H1 (cell line): ENCODE measurements at regions of chr5 and their contacts with region 1.

Region 1: DNA sequence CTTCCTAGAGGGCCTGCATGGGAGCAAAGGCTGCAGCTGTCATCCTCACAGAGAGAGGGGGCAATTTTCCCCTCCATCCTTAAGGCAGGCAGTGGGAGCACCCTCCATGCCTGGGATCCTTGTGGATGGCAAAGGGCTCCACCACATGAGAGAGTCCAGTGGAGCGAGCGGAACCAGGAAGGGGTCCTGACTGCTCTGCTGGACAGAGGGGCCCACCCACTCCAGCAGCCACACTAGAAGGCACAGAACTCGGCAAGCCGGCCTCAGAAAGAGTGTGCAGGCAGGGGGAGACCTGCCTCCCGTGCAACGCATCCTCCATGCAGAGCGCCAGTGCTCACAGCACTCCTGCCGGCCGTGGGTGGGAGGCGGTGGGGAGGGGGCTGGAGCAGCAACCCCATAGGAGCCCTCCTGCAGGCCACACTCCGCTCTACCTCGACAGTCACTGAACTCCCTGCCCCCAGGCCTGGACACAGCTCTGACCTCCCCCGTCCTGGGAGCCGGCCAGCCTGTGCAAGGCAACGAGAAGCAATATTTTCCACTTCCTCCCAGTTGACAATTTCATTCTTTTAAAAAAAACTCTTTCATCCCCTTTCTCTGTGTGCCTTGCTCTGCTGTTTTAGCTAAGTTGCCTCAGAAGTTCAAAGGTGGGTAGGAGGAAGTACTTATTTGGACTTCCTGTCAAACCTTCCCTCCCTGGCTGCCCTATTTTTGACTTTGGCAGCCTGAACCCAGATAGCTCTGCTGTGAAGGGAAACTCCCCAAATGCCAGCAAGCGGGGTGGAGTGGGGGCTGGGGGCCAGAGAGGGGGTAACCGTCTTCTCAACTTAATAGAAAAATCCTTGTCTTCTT is 5.3 kb upstream of the LCP2 start:
- DNase-seq: no peak
- H3K4me3 ChIP-seq: no peak overlapping the region
- H3K27ac ChIP-seq: no peak overlapping the region
- H3K4me1 ChIP-seq: peaks cover 0 to 5% (median 2%) of the 10 kb centered on the region in 4 experiments; a peak in 2 of 7 replicates
- H3K27me3 ChIP-seq: no peaks in the 10 kb centered on the region; a peak in 1 of 7 replicates
- CTCF ChIP-seq: peak; percentile 7 to 32 (median 27); a peak in 3 of 4 replicates
- EP300 ChIP-seq: no peak
- POLR2A ChIP-seq: no peak
- RAD21 ChIP-seq: peak in 1 of 2 experiments; percentile 19; a peak in 1 of 4 replicates

Region 2: GRCh38 chr5:170173235-170173634 is 129.6 kb before region 1 on chr5:
- CTCF ChIA-PET with region 1: no interaction called
- POLR2A ChIA-PET with region 1: no interaction called
- DNase-seq: no peak
- H3K4me3 ChIP-seq: no peak overlapping the region
- H3K27ac ChIP-seq: no peak overlapping the region
- H3K4me1 ChIP-seq: no peaks in the 10 kb centered on the region
- H3K27me3 ChIP-seq: no peaks in the 10 kb centered on the region; a peak in 2 of 7 replicates
- CTCF ChIP-seq: no peak
- EP300 ChIP-seq: no peak
- POLR2A ChIP-seq: no peak
- RAD21 ChIP-seq: no peak

Region 3: DNA sequence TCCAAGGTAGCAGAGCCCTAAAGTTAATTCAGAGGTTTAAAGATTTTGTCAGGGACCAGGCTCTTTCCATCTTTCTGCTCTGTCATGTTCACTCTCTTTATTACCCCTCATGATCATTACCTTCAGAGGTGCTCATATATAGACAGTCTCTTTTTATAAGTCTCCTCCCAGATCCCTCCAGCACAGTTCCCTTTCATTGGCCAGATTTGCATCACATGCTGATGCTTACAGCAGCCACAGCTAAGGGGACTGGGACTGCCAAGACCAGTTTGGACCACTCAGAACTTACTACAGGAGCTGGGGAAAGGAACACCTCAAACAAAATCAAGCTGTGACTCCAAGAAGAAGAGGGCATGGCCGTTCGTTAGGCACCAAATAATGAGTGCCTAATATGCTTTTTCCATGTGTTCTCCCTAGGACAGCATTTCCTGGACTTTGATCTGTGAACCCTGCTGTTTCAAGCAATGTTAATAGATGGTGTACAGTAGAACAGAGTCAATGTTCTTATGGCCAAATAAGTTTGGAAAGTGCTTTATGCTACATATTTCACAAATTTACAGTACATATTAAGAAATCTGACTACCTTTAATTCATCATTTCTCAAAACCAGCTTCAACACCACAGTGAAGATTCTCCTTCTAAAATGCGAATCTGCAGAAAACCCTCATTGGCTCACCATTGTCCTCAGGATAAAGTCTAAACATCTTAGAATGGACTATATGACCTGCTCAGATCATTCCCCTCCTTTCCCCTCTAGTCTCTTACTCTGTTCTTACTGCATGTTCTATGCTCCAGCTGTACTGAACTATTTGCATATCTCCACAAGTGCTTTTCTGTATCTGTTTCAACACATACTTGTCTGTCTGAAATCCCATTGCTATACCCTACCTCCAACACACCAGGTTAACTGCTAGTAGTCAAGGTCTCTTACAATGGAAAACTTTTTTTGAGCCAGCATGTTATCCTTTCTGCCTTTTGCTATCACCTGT is 66.7 kb before region 1 on chr5:
- CTCF ChIA-PET with region 1: no interaction called
- POLR2A ChIA-PET with region 1: no interaction called
- DNase-seq: no peak
- H3K4me3 ChIP-seq: no peak overlapping the region
- H3K27ac ChIP-seq: no peak overlapping the region
- H3K4me1 ChIP-seq: no peaks in the 10 kb centered on the region
- H3K27me3 ChIP-seq: no peaks in the 10 kb centered on the region
- CTCF ChIP-seq: no peak
- EP300 ChIP-seq: no peak
- POLR2A ChIP-seq: no peak
- RAD21 ChIP-seq: no peak

Region 4: GRCh38 chr5:170287532-170287931 is 15.3 kb before region 1 on chr5:
- CTCF ChIA-PET with region 1: interaction called, 15 read pairs
- POLR2A ChIA-PET with region 1: interaction called, 5 read pairs
- DNase-seq: no peak
- H3K4me3 ChIP-seq: no peak overlapping the region
- H3K27ac ChIP-seq: no peak overlapping the region
- H3K4me1 ChIP-seq: peaks cover 2 to 7% (median 3%) of the 10 kb centered on the region in 4 experiments; a peak in 4 of 7 replicates
- H3K27me3 ChIP-seq: no peaks in the 10 kb centered on the region
- CTCF ChIP-seq: no peak
- EP300 ChIP-seq: no peak
- POLR2A ChIP-seq: no peak
- RAD21 ChIP-seq: no peak

Region 5: DNA sequence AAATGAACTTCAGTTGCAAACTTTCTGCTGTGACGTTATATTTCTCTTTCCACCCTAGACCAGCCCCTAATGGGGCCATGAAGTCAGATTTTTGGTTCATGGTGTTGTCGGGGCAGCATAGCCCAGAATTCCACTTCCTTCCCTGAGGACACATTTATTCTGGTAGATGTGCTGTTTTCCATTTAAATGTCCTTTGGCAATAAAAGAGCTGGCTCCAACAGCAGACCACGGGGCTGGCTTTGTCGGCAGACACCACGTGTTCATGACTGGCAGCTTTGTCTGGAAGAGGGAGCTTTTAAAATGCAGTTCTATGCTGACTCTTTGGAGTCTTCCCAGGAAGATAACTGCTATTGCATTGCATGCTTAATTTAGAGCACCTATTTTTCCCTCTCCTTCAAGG is 12.3 kb after region 1 on chr5:
- CTCF ChIA-PET with region 1: interaction called, 11 read pairs
- POLR2A ChIA-PET with region 1: no interaction called
- DNase-seq: no peak
- H3K4me3 ChIP-seq: no peak overlapping the region
- H3K27ac ChIP-seq: no peak overlapping the region
- H3K4me1 ChIP-seq: peaks cover 0 to 6% (median 1%) of the 10 kb centered on the region in 4 experiments; a peak in 5 of 7 replicates
- H3K27me3 ChIP-seq: no peaks in the 10 kb centered on the region
- CTCF ChIP-seq: no peak
- EP300 ChIP-seq: no peak
- POLR2A ChIP-seq: no peak
- RAD21 ChIP-seq: no peak